CD8-positive, alpha-beta memory T cell (primary cell): ENCODE measurements at regions of chr7 and their contacts with region 1.

Region 1: GRCh38 chr7:50317221-50317678 is 12.7 kb downstream of the IKZF1 start:
- DNase-seq: peak in 3 of 5 donors; percentile 74 to 85 (median 74)
- H3K4me3 ChIP-seq: peak overlapping the region; percentile 57
- H3K4me3 Mint-ChIP-seq: peak overlapping the region; percentile 79 to 100 (median 98)
- H3K27ac ChIP-seq: peak overlapping the region; percentile 66
- H3K27ac Mint-ChIP-seq: peak overlapping the region; percentile 92 to 99 (median 98)
- H3K4me1 ChIP-seq: peaks cover 98% of the 10 kb centered on the region
- H3K4me1 Mint-ChIP-seq: peaks cover 95 to 100% (median 99%) of the 10 kb centered on the region in 3 donors
- H3K27me3 ChIP-seq: no peaks in the 10 kb centered on the region
- H3K27me3 Mint-ChIP-seq: no peaks in the 10 kb centered on the region

Region 2: GRCh38 chr7:50349963-50350944 is 33.0 kb after region 1 on chr7:
- CTCF ChIA-PET with region 1: interaction called, 815 read pairs
- POLR2A ChIA-PET with region 1: interaction called, 15 read pairs
- DNase-seq: peak in 4 of 5 donors; percentile 46 to 80 (median 58)
- H3K4me3 ChIP-seq: peak overlapping the region; percentile 44
- H3K4me3 Mint-ChIP-seq: peak overlapping the region; percentile 59 to 90 (median 68)
- H3K27ac ChIP-seq: peak overlapping the region; percentile 73
- H3K27ac Mint-ChIP-seq: peak overlapping the region in 7 of 8 donors; percentile 92 to 100 (median 96)
- H3K4me1 ChIP-seq: peaks cover 97% of the 10 kb centered on the region
- H3K4me1 Mint-ChIP-seq: peaks cover 97 to 100% (median 100%) of the 10 kb centered on the region in 3 donors
- H3K27me3 ChIP-seq: no peaks in the 10 kb centered on the region
- H3K27me3 Mint-ChIP-seq: no peaks in the 10 kb centered on the region